IMR-90 (cell line): ENCODE measurements at regions of chr2 and their contacts with region 1.

Region 1: GRCh38 chr2:46769809-46770208 is 145.8 kb downstream of the MCFD2 start:
- DNase-seq: peak; percentile 23
- ATAC-seq: no peak
- H3K4me3 ChIP-seq: no peak overlapping the region
- H3K27ac ChIP-seq: no peak overlapping the region; the same call in 1 of the 2 replicates
- H3K4me1 ChIP-seq: peaks cover 9% of the 10 kb centered on the region
- H3K27me3 ChIP-seq: no peaks in the 10 kb centered on the region
- CTCF ChIP-seq: 0 out of 2 replicates have a peak, but pooled peaks have one; percentile 3
- POLR2A ChIP-seq: no peak
- RAD21 ChIP-seq: no peak

Region 2: DNA sequence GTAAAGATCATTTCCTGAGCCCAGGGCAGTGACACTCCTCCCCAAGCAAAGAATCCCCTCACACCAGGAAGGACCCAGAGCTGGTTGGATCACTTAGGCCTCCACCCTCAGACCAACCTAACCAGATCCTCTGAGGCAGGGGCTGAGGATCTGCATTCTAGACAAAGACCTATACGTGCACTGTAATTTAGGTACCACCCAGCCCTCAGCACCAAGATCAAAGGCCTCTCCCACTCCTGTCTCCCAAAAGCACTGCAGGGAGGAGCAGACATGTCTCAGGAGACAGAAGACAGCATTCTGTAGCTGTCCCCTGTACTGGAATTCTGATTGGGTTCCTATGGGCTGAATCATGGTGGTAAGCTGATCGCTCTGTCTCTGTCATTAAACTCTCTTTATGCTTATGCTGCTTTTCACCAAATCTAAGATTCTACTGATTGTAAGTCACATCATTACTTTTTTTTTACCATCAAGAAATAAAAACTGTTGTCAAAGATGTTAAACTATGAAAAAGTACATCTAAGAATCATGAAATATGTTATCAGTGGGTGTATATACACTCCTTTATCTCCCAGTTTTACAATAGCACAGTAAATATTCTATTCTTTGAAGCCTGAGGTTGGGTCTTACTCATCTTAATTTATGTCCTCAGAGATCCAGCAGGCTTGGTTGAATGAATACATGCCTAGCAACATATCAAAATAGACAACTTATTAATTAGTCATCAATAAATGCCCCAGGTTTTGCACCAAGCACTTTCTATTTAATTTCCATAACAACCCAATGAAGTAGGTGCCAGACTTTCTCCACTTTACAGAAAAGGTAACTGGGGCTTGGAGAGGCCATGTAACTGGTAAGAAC is 117.4 kb after region 1 on chr2:
- CTCF ChIA-PET with region 1: no interaction called
- POLR2A ChIA-PET with region 1: no interaction called
- dilution Hi-C with region 1: no loop called
- in situ Hi-C with region 1: no loop called
- intact Hi-C with region 1: loop called (anchors 2 kb)
- DNase-seq: peak; percentile 60
- ATAC-seq: peak; percentile 25; the same call in 1 of the 2 replicates
- H3K4me3 ChIP-seq: no peak overlapping the region
- H3K27ac ChIP-seq: peak overlapping the region; percentile 92
- H3K4me1 ChIP-seq: peaks cover 32% of the 10 kb centered on the region
- H3K27me3 ChIP-seq: no peaks in the 10 kb centered on the region
- CTCF ChIP-seq: no peak
- POLR2A ChIP-seq: no peak
- RAD21 ChIP-seq: no peak